ENCODE measurements at regions of chr2 and their contacts with region 1.

Region 1: DNA sequence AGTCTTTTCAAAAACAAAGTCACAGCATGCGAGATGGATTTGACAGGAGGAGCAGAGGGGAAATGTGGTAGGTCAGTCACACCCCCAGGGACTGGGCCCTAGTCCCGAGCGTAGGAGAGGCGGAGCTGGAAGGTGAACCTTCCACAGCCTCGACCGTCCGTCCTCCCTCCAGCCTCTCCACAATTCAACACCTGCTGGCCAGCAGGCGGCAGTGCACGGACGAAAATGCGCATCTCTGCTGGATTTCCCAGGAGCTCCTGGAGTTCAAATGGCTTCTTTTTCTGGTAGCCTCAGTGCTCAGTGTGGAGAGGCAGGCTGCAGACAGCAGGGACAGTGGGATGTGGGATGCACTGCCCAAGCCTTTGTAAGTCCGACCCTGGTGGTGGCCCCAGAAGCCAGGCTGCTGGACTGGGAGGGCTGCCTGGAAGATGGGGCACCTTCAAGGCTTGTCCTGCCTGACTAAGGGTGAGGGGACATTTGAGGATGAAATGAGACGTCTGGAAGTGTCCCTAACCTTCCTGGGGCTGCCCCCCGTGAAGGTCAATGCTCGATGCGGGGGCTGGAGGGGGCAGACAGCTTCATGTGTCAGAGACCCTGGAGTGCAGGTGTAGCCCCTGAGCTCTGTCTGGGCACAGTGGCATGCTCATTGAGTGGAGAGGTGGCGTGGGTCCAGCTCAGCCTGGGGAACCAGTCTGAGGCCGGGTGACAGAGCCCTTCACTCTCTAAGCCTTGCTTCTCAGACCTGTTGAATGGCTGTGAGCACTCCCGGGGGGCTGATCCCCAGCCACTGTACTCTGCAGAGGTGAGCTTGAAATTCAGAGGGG is 189.5 kb downstream of the TFCP2L1 start:
- DNase-seq: peak; percentile 77
- H3K4me3 ChIP-seq: no peak overlapping the region
- H3K27ac ChIP-seq: no peak overlapping the region
- H3K4me1 ChIP-seq: no peaks in the 10 kb centered on the region
- H3K27me3 ChIP-seq: no peaks in the 10 kb centered on the region
- CTCF ChIP-seq: peak; percentile 65

Region 2: DNA sequence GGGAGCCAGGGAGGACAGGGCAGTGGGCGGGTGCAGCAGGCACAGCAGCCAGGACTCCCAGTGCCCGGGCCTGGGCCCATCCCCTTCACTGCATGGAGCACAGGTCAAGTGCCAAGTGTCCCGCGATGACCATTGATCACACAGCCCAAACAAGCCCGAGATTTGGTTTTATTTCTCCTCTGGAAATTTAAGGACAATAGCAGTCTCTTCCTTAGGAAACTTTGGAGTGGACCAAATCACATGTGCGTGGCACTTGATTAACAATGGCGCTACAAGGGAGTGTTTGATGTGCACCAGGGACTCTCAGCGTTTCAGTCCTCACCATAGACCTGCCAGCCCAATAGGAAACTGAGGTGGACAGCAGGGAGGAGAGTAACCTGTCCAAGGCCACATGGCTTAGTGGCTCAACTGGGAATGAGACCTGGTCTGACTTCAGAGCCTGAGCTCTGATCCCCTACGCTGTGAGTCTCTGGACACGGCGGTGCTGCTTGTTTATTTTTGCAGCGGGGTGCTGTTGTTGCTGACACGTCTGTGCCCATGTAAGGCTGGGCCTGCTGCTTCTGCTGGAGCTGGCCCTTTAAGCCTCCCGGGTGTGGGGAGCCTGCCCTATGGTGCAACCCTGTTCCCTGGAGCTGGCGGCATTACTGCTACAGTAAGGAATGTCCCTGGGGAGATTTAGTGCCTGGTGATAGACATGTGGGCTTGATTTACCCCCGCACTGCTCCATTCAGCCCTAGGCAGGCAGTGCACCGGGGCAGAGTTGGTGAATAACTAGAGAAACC is 555.3 kb before region 1 on chr2:
- intact Hi-C with region 1: no loop called
- DNase-seq: peak; percentile 23
- H3K4me3 ChIP-seq: no peak overlapping the region
- H3K27ac ChIP-seq: no peak overlapping the region
- H3K4me1 ChIP-seq: no peaks in the 10 kb centered on the region
- H3K27me3 ChIP-seq: no peaks in the 10 kb centered on the region
- CTCF ChIP-seq: no peak

Region 3: DNA sequence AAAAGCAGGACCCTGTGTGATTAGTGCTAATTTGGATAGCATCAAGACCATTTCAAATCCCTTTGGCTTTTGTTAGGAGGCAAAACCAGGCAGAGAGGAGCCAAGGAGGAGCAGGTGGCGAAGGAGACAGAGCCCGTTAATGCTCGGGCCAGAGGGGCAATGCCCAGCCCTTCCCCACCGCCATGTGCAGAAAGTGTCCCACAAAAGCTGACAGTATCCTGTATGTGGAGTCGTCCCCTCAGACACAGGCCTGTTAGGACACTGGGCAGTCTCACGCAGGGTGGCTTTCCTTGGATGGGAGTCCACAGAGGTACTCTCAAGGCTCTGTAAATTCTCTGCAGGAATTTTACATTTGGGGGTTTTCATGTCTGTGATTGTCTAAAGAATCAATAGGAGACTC is 234.3 kb after region 1 on chr2:
- intact Hi-C with region 1: loop called (anchors 10 kb)
- DNase-seq: no peak
- H3K4me3 ChIP-seq: no peak overlapping the region
- H3K27ac ChIP-seq: no peak overlapping the region
- H3K4me1 ChIP-seq: peaks cover 4% of the 10 kb centered on the region
- H3K27me3 ChIP-seq: no peaks in the 10 kb centered on the region
- CTCF ChIP-seq: no peak

Region 4: DNA sequence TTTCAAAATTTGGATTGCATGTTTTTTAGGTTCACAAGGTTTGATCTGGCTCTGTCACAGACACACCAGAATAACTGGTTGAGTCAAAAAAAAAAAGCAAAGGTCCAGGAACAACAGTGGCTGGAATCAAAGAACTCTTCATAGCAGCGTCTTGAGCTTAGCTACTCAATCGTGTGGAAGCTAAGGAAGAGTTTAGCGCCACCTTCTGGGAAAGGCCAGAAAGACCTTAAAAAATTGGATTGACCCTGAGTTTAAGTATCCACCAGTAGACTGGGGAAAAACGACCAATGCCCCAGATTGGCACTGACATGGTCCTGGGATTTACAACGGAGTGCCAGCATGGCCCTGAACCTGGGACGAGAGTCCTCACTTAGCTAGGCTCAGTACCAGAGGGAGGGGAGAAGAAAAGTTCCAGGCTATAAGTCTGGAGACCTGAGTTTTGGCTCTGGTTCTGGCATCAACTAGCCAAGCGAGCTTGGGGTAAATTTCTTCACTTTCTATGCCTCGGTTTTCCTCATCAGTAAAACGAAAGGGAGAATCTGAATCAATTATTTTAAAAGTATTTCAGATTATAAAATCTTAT is 260.7 kb after region 1 on chr2:
- intact Hi-C with region 1: loop called (anchors 5 kb)
- DNase-seq: peak; percentile 76
- H3K4me3 ChIP-seq: no peak overlapping the region
- H3K27ac ChIP-seq: peak overlapping the region; percentile 56
- H3K4me1 ChIP-seq: no peaks in the 10 kb centered on the region
- H3K27me3 ChIP-seq: no peaks in the 10 kb centered on the region
- CTCF ChIP-seq: peak; percentile 57

Measured in colonic mucosa (tissue), 4 donors.